Activated CD8-positive, alpha-beta T cell treated with anti-CD3 and anti-CD28 coated beads for 36 hours (primary cell): ENCODE measurements at regions of chr17 and their contacts with region 1.

Region 1: DNA sequence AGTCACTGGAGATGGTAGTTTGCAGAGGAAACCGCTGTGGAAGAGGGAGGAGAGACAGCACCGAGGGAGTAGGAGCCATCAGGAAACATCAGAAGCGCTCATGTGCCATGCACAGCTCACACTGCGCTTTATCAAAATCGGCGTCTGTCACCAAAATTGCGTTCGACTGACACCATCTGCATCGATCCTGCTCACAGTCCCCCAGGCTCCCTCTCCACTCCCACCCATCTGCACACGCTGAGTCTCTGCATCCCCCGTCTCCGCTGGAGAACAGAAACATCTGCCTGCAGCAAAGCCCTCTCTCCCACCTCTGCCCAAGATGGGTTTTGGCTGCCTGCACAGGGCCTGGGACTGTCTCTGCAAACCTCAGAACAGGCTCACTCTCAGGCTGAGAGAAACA is 187.5 kb upstream of the RPL38 start:
- DNase-seq: no peak
- ATAC-seq: no peak
- H3K4me3 Mint-ChIP-seq: no peak overlapping the region
- H3K27ac Mint-ChIP-seq: no peak overlapping the region
- H3K4me1 Mint-ChIP-seq: peaks cover 8% of the 10 kb centered on the region
- H3K27me3 Mint-ChIP-seq: peaks cover 5% of the 10 kb centered on the region
- CTCF ChIP-seq: no peak

Region 2: GRCh38 chr17:73910206-73910605 is 105.8 kb before region 1 on chr17:
- CTCF ChIA-PET with region 1: no interaction called
- POLR2A ChIA-PET with region 1: no interaction called
- intact Hi-C with region 1: no loop called
- DNase-seq: no peak
- ATAC-seq: no peak
- H3K4me3 Mint-ChIP-seq: no peak overlapping the region
- H3K27ac Mint-ChIP-seq: no peak overlapping the region
- H3K4me1 Mint-ChIP-seq: peaks cover 2% of the 10 kb centered on the region
- H3K27me3 Mint-ChIP-seq: peaks cover 18% of the 10 kb centered on the region
- CTCF ChIP-seq: no peak

Region 3: DNA sequence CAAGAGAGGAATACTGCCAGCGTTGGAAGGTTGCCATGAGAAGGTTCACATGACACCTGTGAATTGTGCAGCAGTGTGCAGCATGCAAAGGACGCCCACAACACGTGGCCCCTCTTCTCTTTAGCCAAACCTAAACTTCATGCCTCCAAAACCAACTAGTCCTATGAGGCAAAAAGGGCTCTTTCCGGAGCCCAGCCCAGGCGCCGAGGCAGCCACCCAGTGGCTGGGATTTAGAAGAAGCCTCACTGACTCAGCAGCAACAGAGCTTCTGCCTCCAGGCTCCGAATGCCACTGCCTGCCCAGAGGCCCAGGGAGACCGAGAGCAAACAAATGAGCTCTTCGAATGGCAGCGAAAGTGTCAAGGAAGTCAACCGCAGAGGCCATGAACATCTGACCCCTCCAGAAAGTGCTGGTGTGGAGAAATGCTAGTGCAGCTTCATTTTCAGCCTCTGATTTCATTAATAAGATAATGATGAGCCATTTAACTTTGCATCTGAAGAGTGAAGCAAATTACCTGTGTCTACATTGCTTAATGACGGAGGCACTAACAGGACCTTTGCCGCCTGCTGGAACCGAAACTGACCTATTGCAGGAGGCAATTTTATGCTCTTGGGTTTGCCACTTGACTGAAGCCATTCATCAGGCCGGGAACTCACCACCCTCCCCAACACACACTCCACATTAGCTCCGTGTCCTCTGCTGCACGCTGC is 29.7 kb after region 1 on chr17:
- CTCF ChIA-PET with region 1: no interaction called
- POLR2A ChIA-PET with region 1: no interaction called
- intact Hi-C with region 1: loop called (anchors 2 kb)
- DNase-seq: no peak
- ATAC-seq: no peak
- H3K4me3 Mint-ChIP-seq: no peak overlapping the region
- H3K27ac Mint-ChIP-seq: no peak overlapping the region
- H3K4me1 Mint-ChIP-seq: no peaks in the 10 kb centered on the region
- H3K27me3 Mint-ChIP-seq: peaks cover 5% of the 10 kb centered on the region
- CTCF ChIP-seq: no peak

Region 4: GRCh38 chr17:74082881-74083280 is 66.9 kb after region 1 on chr17:
- CTCF ChIA-PET with region 1: no interaction called
- POLR2A ChIA-PET with region 1: no interaction called
- intact Hi-C with region 1: no loop called
- DNase-seq: no peak
- ATAC-seq: no peak
- H3K4me3 Mint-ChIP-seq: no peak overlapping the region
- H3K27ac Mint-ChIP-seq: no peak overlapping the region
- H3K4me1 Mint-ChIP-seq: no peaks in the 10 kb centered on the region
- H3K27me3 Mint-ChIP-seq: peaks cover 6% of the 10 kb centered on the region
- CTCF ChIP-seq: no peak

Region 5: DNA sequence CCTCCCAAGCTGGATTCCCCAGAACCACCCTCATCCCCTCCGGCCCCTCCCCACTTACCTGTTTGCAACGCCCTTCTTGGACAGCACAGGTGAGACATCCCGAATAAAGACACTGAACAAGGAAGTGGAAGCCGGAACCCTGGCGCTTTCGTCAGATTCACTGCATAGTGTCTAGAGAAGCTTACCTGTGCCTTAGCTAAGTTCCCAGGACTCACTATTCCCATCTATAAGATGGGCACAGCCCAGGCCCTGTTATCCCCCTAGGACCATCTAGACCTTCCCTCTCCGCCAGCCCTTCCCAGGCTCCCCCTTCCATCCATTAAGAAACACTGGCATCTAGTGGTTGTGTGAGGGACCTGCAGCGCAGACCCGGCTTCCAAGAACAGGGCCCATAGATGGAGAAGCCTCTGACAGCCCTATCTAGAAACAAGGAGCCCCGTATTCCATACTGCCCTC is 160.6 kb after region 1 on chr17:
- CTCF ChIA-PET with region 1: no interaction called
- POLR2A ChIA-PET with region 1: no interaction called
- intact Hi-C with region 1: no loop called
- DNase-seq: peak; percentile 64
- ATAC-seq: peak; percentile 79
- H3K4me3 Mint-ChIP-seq: no peak overlapping the region
- H3K27ac Mint-ChIP-seq: no peak overlapping the region
- H3K4me1 Mint-ChIP-seq: no peaks in the 10 kb centered on the region
- H3K27me3 Mint-ChIP-seq: peaks cover 16% of the 10 kb centered on the region
- CTCF ChIP-seq: peak; percentile 73